ENCODE measurements at regions of chr7 and their contacts with region 1.

Region 1: DNA sequence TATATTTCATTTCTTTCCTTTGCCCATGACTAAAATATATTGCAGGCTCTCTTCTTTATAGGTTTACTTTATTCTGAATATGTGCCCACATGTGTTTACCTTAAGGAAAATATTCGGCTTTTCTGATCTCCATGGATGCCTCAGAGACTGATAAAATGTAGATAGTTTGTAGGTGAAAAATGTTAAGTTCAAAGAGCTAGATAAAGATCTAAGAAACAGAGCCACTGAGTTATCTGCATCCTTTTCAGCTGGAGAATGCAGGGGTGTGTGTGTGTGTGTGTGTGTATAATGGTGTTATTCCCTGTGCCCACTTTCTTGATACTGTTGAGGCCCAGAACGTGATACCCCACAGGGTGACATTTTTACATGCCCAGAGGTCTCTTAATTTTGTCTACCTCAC is 150.8 kb downstream of the LRRC4 start:
- DNase-seq: no peak
- H3K4me3 ChIP-seq: no peak overlapping the region
- H3K27ac ChIP-seq: no peak overlapping the region
- H3K4me1 ChIP-seq: peaks cover 1% of the 10 kb centered on the region
- H3K27me3 ChIP-seq: no peaks in the 10 kb centered on the region
- CTCF ChIP-seq: no peak

Region 2: DNA sequence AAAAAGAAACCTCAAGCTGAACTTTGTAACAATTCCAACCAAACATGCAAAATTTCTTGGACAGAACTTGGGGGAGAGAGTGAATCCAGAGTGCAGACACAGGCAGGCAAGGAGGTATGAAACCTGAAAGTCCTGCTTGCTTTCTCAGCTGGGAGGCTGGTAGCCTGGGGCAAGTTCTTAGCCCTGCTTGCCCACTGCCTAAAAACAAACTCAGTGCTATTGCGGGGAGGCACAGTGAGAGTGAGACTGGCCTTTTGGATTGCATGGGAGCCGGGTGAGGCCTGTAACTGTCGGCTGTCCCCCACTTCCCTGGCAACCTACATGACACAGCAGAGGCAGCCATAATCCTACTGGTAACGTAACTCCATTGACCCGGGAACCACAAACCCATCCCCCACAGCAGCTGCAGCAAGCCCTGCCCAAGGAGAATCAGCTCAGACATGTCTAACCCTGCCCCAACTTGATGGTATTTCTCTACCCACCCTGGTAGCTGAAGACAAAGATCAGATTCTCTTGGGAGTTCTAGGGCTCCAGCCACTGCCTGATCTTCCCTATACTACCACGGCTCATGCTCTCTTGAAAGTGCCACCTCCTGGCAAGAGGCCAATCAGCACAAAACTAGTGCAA is 1291.3 kb before region 1 on chr7:
- CTCF ChIA-PET with region 1: no interaction called
- POLR2A ChIA-PET with region 1: interaction called, 12 read pairs
- intact Hi-C with region 1: no loop called
- DNase-seq: no peak
- H3K4me3 ChIP-seq: no peak overlapping the region
- H3K27ac ChIP-seq: no peak overlapping the region
- H3K4me1 ChIP-seq: no peaks in the 10 kb centered on the region
- H3K27me3 ChIP-seq: no peaks in the 10 kb centered on the region
- CTCF ChIP-seq: no peak

Measured in A673 (cell line).